ENCODE measurements at regions of chr20 and their contacts with region 1.

Region 1: DNA sequence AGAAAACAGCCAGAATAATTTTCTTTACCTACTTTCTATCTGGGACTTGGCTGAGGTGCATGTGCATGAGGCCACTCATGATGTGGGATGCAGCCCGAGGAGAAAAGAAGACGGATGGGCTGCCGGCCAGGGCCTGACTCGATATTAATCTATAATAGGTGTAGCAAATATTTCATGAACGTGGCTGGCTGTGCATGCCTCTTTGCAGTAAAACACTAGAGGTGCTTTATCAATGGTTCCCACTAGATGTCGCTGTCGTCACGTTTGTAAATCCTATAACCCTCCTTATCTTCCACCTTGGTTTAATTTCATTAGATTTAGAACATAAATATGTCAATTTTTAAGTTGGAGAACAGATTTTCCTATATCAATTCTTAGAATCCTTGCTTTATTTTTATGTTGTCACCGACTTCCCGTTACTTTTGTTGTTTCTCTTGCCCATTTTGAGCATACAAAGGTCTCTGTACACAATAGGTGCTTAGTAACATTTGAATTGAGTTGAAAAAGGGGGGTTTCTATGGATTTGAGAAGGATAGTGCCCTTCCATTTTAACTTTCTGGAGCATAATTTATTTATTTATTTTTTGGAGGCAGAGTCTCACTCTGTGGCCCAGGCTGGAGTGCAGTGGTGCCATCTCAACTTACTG is 19.6 kb upstream of the FERMT1 start:
- DNase-seq: peak; percentile 89
- ATAC-seq: peak; percentile 91
- H3K4me3 ChIP-seq: peak overlapping the region; percentile 15; the same call in 1 of the 2 replicates
- H3K27ac ChIP-seq: no peak overlapping the region
- H3K4me1 ChIP-seq: no peaks in the 10 kb centered on the region
- H3K27me3 ChIP-seq: peaks cover 31% of the 10 kb centered on the region; the same call in 1 of the 2 replicates
- CTCF ChIP-seq: peak; percentile 93

Region 2: GRCh38 chr20:6767536-6768227 is 625.2 kb after region 1 on chr20 and contains the start of gene BMP2:
- CTCF ChIA-PET with region 1: no interaction called
- POLR2A ChIA-PET with region 1: no interaction called
- intact Hi-C with region 1: loop called (anchors 10 kb)
- DNase-seq: peak; percentile 28
- ATAC-seq: peak; percentile 69
- H3K4me3 ChIP-seq: peak within 1 kb of the TSS; percentile 67
- H3K27ac ChIP-seq: no peak within 1 kb of the TSS
- H3K4me1 ChIP-seq: no peaks in the 10 kb centered on the region
- H3K27me3 ChIP-seq: peaks cover 51% of the 10 kb centered on the region
- CTCF ChIP-seq: no peak
- total RNA-seq, gene BMP2: 0.40 and 0.73 TPM in 2 replicates

Measured in PC-3 (cell line).